T-cell (primary cell): ENCODE measurements at regions of chr21 and their contacts with region 1.

Region 1: GRCh38 chr21:30044445-30045064 is 104.8 kb upstream of the GRIK1 start:
- DNase-seq: peak in 1 of 35 experiments; percentile 23
- ATAC-seq: no peak
- H3K4me3 ChIP-seq: no peak overlapping the region
- H3K4me3 Mint-ChIP-seq: no peak overlapping the region
- H3K27ac ChIP-seq: no peak overlapping the region
- H3K27ac Mint-ChIP-seq: no peak overlapping the region
- H3K4me1 ChIP-seq: no peaks in the 10 kb centered on the region
- H3K4me1 Mint-ChIP-seq: no peaks in the 10 kb centered on the region
- H3K27me3 ChIP-seq: no peaks in the 10 kb centered on the region
- H3K27me3 Mint-ChIP-seq: peaks cover 2 to 4% of the 10 kb centered on the region in 2 donors

Region 2: DNA sequence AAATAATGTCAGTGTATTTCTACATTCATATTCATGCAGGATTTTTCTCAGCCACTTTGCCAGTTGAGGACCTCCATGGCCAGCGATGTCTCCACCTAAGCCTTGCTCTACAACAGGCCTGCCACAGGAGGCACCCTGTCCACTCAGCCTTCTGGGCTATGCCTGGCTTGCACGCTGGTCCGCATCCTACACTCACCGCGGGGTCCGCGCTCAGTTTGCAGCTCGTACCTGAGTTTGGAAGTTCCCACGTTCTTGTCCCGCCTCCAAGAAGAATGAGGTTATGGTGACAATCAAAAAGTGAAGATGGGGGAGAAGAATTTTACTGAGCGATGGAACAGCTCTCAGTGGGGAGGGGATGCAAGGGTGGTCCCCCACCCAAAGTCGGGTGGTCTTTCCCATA is 11.1 kb before region 1 on chr21:
- CTCF ChIA-PET with region 1: interaction called in 1 of 2 experiments, 3 read pairs
- POLR2A ChIA-PET with region 1: interaction called in 1 of 2 experiments, 11 read pairs
- DNase-seq: no peak
- ATAC-seq: no peak
- H3K4me3 ChIP-seq: no peak overlapping the region
- H3K4me3 Mint-ChIP-seq: no peak overlapping the region
- H3K27ac ChIP-seq: no peak overlapping the region
- H3K27ac Mint-ChIP-seq: no peak overlapping the region
- H3K4me1 ChIP-seq: no peaks in the 10 kb centered on the region
- H3K4me1 Mint-ChIP-seq: no peaks in the 10 kb centered on the region
- H3K27me3 ChIP-seq: no peaks in the 10 kb centered on the region
- H3K27me3 Mint-ChIP-seq: peaks cover 0 to 6% of the 10 kb centered on the region in 2 donors